Activated CD4-positive, alpha-beta memory T cell treated with anti-CD3 and anti-CD28 coated beads for 36 hours (primary cell): ENCODE measurements at regions of chr3 and their contacts with region 1.

Region 1: GRCh38 chr3:48268381-48269183 is 27.7 kb downstream of the ZNF589 start:
- DNase-seq: peak; percentile 95
- H3K4me3 Mint-ChIP-seq: peak overlapping the region; percentile 33
- H3K27ac Mint-ChIP-seq: peak overlapping the region; percentile 89
- H3K4me1 Mint-ChIP-seq: peaks cover 37% of the 10 kb centered on the region
- H3K27me3 Mint-ChIP-seq: no peaks in the 10 kb centered on the region

Region 2: DNA sequence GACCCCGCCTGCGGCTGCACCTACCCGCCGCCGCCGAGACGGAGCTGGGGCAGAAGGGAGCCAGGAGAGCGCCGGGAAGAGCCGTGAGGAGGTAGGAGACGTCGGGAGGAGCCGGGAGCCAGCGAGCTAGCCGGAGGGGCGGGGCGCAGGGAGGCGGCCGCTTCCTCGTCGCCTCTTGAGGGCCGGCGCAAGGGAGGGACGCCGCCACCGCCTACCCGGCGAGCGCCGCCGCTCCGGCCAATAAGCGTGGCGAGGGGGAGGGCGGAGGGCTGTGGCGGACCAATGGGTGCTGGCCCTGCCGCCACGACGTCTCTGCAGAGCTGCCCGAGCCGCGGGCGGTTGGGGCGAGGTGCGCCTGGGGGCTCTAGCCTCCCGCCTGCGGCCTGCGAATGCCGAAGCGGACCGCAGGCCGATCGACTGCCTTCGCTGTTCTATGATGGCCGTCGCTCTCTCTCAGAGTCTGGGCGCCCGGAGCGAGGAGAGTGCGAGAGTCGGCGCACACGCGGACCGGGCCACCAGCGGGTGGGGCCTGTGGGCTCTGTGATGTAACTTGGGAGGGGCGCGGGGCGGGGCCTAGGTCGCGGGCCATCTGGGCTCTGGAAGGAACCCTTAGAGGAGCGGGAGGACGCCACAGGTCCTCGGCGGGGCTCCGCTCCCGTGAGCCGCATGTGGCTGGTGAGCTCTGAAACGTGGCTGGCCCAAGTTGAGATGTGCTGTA is 179.7 kb before region 1 on chr3:
- CTCF ChIA-PET with region 1: no interaction called
- POLR2A ChIA-PET with region 1: no interaction called
- intact Hi-C with region 1: loop called (anchors 2 kb)
- DNase-seq: peak; percentile 96
- H3K4me3 Mint-ChIP-seq: peak overlapping the region; percentile 93
- H3K27ac Mint-ChIP-seq: peak overlapping the region; percentile 89
- H3K4me1 Mint-ChIP-seq: peaks cover 32% of the 10 kb centered on the region
- H3K27me3 Mint-ChIP-seq: no peaks in the 10 kb centered on the region

Region 3: GRCh38 chr3:48232734-48233133 is 35.8 kb before region 1 on chr3:
- CTCF ChIA-PET with region 1: interaction called, 3 read pairs
- POLR2A ChIA-PET with region 1: no interaction called
- intact Hi-C with region 1: loop called (anchors 5 kb)
- DNase-seq: peak; percentile 77
- H3K4me3 Mint-ChIP-seq: no peak overlapping the region
- H3K27ac Mint-ChIP-seq: no peak overlapping the region
- H3K4me1 Mint-ChIP-seq: peaks cover 2% of the 10 kb centered on the region
- H3K27me3 Mint-ChIP-seq: peaks cover 3% of the 10 kb centered on the region

Region 4: GRCh38 chr3:48301020-48301796 is 32.6 kb after region 1 on chr3:
- CTCF ChIA-PET with region 1: interaction called, 5 read pairs
- POLR2A ChIA-PET with region 1: interaction called, 17 read pairs
- intact Hi-C with region 1: loop called (anchors 1 kb)
- DNase-seq: peak; percentile 95
- H3K4me3 Mint-ChIP-seq: peak within 1 kb of the TSS; percentile 96
- H3K27ac Mint-ChIP-seq: peak within 1 kb of the TSS; percentile 98
- H3K4me1 Mint-ChIP-seq: peaks cover 34% of the 10 kb centered on the region
- H3K27me3 Mint-ChIP-seq: no peaks in the 10 kb centered on the region

Region 5: GRCh38 chr3:48918388-48919214 is 650.0 kb after region 1 on chr3 and contains the start of gene ARIH2:
- CTCF ChIA-PET with region 1: no interaction called
- POLR2A ChIA-PET with region 1: no interaction called
- intact Hi-C with region 1: loop called (anchors 2 kb)
- DNase-seq: peak; percentile 94
- H3K4me3 Mint-ChIP-seq: peak within 1 kb of the TSS; percentile 98
- H3K27ac Mint-ChIP-seq: peak within 1 kb of the TSS; percentile 100
- H3K4me1 Mint-ChIP-seq: peaks cover 31% of the 10 kb centered on the region
- H3K27me3 Mint-ChIP-seq: no peaks in the 10 kb centered on the region
- total RNA-seq, gene ARIH2: 109 to 130 TPM

Region 6: GRCh38 chr3:49248846-49249238 is 980.3 kb after region 1 on chr3:
- CTCF ChIA-PET with region 1: no interaction called
- POLR2A ChIA-PET with region 1: no interaction called
- intact Hi-C with region 1: no loop called
- DNase-seq: no peak
- H3K4me3 Mint-ChIP-seq: no peak overlapping the region
- H3K27ac Mint-ChIP-seq: no peak overlapping the region
- H3K4me1 Mint-ChIP-seq: no peaks in the 10 kb centered on the region
- H3K27me3 Mint-ChIP-seq: no peaks in the 10 kb centered on the region